ENCODE measurements at regions of chr20 and their contacts with region 1.

Region 1: DNA sequence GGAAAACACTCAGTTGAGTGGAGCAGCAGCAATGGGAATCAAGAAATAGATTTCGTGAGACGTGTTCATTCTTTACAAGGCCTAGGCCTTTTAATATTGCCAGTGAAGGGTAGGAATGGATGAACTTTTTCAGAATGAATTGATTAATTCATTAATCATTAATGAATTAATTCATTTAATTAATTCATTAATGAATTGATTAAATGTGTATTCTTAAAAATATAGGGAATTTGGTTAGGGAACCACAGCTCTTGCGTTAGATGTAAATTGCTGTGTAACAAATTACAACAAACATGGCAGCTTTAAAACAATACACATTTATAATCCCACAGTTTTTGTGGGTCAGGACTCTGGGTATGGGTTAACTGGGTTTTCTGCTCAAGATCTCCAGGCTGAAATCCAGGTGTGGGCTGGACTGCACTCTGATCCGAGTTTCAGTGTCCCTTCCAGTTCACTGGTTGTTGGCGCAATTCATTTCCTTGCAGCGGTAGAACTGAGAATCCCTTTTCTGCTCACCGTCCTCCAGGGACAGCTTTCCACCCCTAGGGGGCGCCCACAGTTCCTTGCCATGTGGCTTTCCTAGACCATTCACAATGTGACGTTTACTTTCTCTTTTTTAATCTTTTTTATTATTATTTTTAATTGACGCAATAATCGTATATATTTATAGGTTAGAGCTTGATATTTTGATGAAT is 32.8 kb upstream of the BCAS1 start:
- DNase-seq: peak; percentile 96
- ATAC-seq: peak; percentile 63
- H3K4me3 ChIP-seq: peak overlapping the region in 2 of 3 experiments; percentile 24 to 39; a peak in 2 of 6 replicates
- H3K27ac ChIP-seq: peak overlapping the region; percentile 96
- H3K4me1 ChIP-seq: peaks cover 87% of the 10 kb centered on the region
- H3K27me3 ChIP-seq: no peaks in the 10 kb centered on the region
- CTCF ChIP-seq: peak; percentile 95
- EP300 ChIP-seq: peak; percentile 21 to 75; a peak in 3 of 4 replicates
- POLR2A ChIP-seq: no peak
- RAD21 ChIP-seq: peak; percentile 93

Region 2: DNA sequence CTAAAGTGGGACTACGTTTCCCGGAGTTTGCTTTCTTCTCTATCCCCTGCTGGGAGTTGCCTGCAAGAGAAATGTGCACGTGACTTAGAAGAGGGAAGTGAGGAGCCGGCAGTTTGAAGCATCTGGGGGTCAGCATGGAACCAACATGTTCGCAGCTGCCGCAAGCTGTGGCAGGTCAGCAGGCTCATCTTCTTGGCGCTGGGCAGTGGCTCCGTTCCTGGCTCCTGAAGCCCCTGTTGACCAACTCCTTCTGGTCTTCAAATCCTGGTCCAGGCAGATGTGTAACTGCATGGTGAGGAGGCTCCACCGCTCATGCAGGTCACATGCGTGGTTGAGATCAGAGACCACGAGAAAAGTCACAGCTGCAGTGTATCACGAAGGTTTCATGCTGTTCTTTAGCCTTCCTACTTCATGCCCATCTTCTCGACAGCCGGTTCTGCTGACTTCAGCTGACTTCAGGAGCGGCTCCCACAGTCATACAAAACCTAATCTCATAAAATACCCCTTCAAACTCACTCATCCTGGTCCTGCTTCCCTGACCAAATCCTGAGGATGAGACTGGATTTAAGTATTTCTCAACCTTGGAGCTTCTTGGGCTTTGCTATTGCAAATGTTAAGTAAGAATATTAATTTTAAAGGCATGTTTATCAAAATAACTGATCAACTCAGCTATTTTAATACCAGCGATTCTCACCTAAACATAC is 12.1 kb after region 1 on chr20:
- CTCF ChIA-PET with region 1: interaction called, 5 read pairs
- POLR2A ChIA-PET with region 1: interaction called, 145 read pairs
- in situ Hi-C with region 1: no loop called
- intact Hi-C with region 1: loop called (anchors 1 kb)
- DNase-seq: no peak
- ATAC-seq: peak; percentile 31
- H3K4me3 ChIP-seq: no peak overlapping the region; a peak in 1 of 6 replicates
- H3K27ac ChIP-seq: peak overlapping the region; percentile 83
- H3K4me1 ChIP-seq: peaks cover 96% of the 10 kb centered on the region
- H3K27me3 ChIP-seq: no peaks in the 10 kb centered on the region
- CTCF ChIP-seq: no peak
- EP300 ChIP-seq: no peak
- POLR2A ChIP-seq: no peak
- RAD21 ChIP-seq: 0 out of 2 replicates have a peak, but pooled peaks have one; percentile 17

Region 3: DNA sequence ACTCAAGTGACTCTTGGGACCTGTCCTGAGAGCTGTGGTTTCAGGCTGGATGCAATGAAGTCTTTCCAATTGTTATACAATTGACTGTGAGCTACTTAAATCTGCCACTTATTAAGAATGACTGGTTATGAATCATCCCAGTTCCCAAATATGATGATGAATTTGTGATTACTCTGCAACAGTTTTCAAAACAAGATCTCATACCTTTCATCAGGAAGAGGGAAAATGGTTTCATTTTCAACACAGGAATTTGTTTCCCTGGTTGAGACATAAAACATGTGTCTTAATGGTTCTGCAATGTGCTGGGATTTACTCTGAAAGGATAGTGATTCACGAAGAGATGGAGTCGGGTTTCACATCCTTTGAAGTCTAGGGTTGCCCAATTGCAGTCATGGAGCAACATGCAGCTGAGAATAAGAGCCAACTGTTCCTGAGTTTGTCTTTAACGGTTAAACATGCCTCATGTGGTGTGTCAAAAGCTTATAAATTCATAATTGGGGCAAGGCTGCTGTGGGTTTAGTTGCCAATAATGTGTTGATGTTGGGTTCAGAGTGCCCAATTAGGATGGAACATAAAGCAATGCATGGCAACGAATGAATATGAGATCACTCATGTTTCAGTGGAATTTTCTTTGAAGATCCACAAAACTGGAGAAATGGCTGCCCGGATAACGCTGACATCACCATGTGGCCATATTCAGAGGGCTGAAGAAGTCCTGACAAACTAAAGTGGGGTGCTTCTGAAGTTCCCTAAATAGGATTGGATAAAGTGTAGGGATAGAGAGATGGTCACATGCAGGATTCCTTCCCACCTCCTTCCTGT is 29.6 kb after region 1 on chr20:
- CTCF ChIA-PET with region 1: interaction called, 4 read pairs
- POLR2A ChIA-PET with region 1: interaction called, 287 read pairs
- in situ Hi-C with region 1: no loop called
- intact Hi-C with region 1: loop called (anchors 1 kb)
- DNase-seq: peak; percentile 100
- ATAC-seq: peak; percentile 93
- H3K4me3 ChIP-seq: peak overlapping the region; percentile 0 to 54 (median 7); a peak in 2 of 6 replicates
- H3K27ac ChIP-seq: peak overlapping the region; percentile 99
- H3K4me1 ChIP-seq: peaks cover 56% of the 10 kb centered on the region
- H3K27me3 ChIP-seq: no peaks in the 10 kb centered on the region
- CTCF ChIP-seq: no peak
- EP300 ChIP-seq: peak; percentile 99
- POLR2A ChIP-seq: peak; percentile 9 to 80; a peak in 3 of 4 replicates
- RAD21 ChIP-seq: peak; percentile 63

Region 4: GRCh38 chr20:54148947-54149503 is 45.8 kb after region 1 on chr20:
- CTCF ChIA-PET with region 1: no interaction called
- POLR2A ChIA-PET with region 1: interaction called, 13 read pairs
- in situ Hi-C with region 1: no loop called
- intact Hi-C with region 1: no loop called
- DNase-seq: peak; percentile 94
- ATAC-seq: peak; percentile 66
- H3K4me3 ChIP-seq: no peak overlapping the region
- H3K27ac ChIP-seq: no peak overlapping the region
- H3K4me1 ChIP-seq: peaks cover 24% of the 10 kb centered on the region
- H3K27me3 ChIP-seq: no peaks in the 10 kb centered on the region
- CTCF ChIP-seq: no peak
- EP300 ChIP-seq: 0 out of 4 replicates have a peak, but pooled peaks of 1 of the 2 experiments have one; percentile 10
- POLR2A ChIP-seq: no peak
- RAD21 ChIP-seq: no peak

Region 5: GRCh38 chr20:54173653-54174456 is 70.6 kb after region 1 on chr20 and contains the start of gene CYP24A1:
- CTCF ChIA-PET with region 1: no interaction called
- POLR2A ChIA-PET with region 1: interaction called, 22 read pairs
- in situ Hi-C with region 1: no loop called
- intact Hi-C with region 1: no loop called
- DNase-seq: peak; percentile 80
- ATAC-seq: peak; percentile 68
- H3K4me3 ChIP-seq: peak within 1 kb of the TSS; percentile 48 to 64 (median 54)
- H3K27ac ChIP-seq: peak within 1 kb of the TSS; percentile 1
- H3K4me1 ChIP-seq: peaks cover 82% of the 10 kb centered on the region
- H3K27me3 ChIP-seq: no peaks in the 10 kb centered on the region
- CTCF ChIP-seq: peak; percentile 9; the same call in 1 of the 2 replicates
- EP300 ChIP-seq: no peak
- POLR2A ChIP-seq: peak in 1 of 2 experiments; percentile 62; a peak in 2 of 4 replicates
- RAD21 ChIP-seq: peak; percentile 23; the same call in 1 of the 2 replicates
- total RNA-seq, gene CYP24A1: 6.9 and 9.4 TPM in 2 replicates

Region 6: DNA sequence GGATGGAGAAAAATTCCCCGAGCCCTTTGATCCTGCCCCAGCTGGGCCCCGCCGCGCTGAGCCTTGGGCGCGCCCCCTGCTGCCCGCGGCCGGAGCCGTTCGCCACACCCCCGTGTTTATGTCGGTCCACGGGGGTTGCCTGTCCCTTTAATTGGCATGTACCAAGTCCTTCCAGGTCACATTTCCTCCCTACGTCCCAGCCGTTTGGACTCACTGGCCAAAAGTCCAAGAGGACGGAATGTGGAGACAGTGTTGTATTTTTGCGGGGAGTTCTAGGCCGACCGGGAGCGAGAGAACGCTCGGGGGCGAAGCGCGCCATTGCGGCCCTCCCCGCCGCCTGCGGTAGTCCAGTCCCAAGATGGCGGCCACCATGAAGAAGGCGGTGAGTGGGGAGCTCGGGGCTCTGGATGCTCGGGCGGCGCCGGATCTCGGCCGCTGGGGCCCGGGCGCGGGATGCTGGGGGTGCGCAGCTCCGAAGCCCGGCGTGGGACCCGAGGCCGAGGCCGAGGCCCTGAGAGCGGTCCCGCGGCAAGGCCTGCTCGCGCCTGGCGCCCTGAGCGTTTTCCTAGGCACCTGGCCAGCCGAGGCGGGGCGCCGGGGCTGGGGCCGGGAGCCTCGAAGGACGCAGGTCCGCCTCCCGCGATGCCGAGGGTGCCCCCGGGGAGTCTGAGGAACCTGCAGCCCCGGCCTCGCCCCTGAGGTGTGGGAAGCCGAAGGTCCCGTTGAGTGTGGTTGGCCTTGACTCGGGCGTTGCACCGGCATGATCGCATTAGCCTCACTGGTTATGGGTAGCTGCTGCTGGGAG is 104.7 kb after region 1 on chr20 and contains the start of gene PFDN4:
- CTCF ChIA-PET with region 1: no interaction called
- POLR2A ChIA-PET with region 1: interaction called, 24 read pairs
- in situ Hi-C with region 1: no loop called
- intact Hi-C with region 1: no loop called
- DNase-seq: peak; percentile 88
- ATAC-seq: peak; percentile 95
- H3K4me3 ChIP-seq: peak within 1 kb of the TSS; percentile 77 to 100 (median 82)
- H3K27ac ChIP-seq: peak within 1 kb of the TSS; percentile 97
- H3K4me1 ChIP-seq: peaks cover 50% of the 10 kb centered on the region
- H3K27me3 ChIP-seq: peaks cover 0 to 6% of the 10 kb centered on the region in 2 experiments; a peak in 1 of 5 replicates
- CTCF ChIP-seq: peak; percentile 99
- EP300 ChIP-seq: peak; percentile 43 to 61; a peak in 3 of 4 replicates
- POLR2A ChIP-seq: peak; percentile 59 to 80; a peak in 3 of 4 replicates
- RAD21 ChIP-seq: peak; percentile 63
- total RNA-seq, gene PFDN4: 227 and 299 TPM in 2 replicates